ENCODE measurements at regions of chr10 and their contacts with region 1.

Region 1: GRCh38 chr10:7525314-7526016 is 114.6 kb upstream of the SFMBT2 start:
- DNase-seq: peak; percentile 83
- H3K4me3 ChIP-seq: peak overlapping the region in 1 of 2 experiments; percentile 33; a peak in 1 of 4 replicates
- H3K27ac ChIP-seq: no peak overlapping the region
- H3K4me1 ChIP-seq: peaks cover 0 to 3% of the 10 kb centered on the region in 2 experiments; a peak in 1 of 4 replicates
- H3K27me3 ChIP-seq: no peaks in the 10 kb centered on the region
- CTCF ChIP-seq: peak; percentile 83
- EP300 ChIP-seq: no peak
- RAD21 ChIP-seq: peak; percentile 95

Region 2: DNA sequence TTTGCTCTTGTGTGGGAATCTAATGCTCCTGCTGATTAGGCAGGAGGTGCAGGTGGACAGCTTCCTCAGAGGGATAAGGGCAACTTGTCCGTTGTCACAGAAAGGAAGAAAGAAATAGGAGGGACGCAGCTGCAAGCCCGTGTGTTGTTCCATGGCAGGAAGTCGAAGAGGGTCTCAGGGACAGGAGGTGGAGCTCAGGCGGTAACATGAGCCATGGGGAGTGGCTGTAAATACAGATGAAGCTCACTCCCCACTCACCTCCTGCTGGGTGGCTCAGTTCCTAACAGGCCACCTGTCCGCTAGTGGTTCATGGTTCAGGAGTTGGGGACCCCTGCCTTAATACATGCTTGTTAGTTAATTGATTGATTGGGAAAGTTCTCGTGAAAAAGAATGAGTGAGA is 13.0 kb before region 1 on chr10:
- CTCF ChIA-PET with region 1: interaction called, 15 read pairs
- POLR2A ChIA-PET with region 1: no interaction called
- DNase-seq: no peak
- H3K4me3 ChIP-seq: no peak overlapping the region
- H3K27ac ChIP-seq: no peak overlapping the region
- H3K4me1 ChIP-seq: peaks cover 0 to 3% of the 10 kb centered on the region in 2 experiments; a peak in 2 of 4 replicates
- H3K27me3 ChIP-seq: no peaks in the 10 kb centered on the region; the same call in 1 of the 2 replicates
- CTCF ChIP-seq: no peak
- EP300 ChIP-seq: no peak
- RAD21 ChIP-seq: no peak

Region 3: GRCh38 chr10:7538970-7539667 is 13.7 kb after region 1 on chr10:
- CTCF ChIA-PET with region 1: interaction called, 13 read pairs
- POLR2A ChIA-PET with region 1: no interaction called
- DNase-seq: no peak
- H3K4me3 ChIP-seq: no peak overlapping the region
- H3K27ac ChIP-seq: no peak overlapping the region
- H3K4me1 ChIP-seq: peaks cover 0 to 3% of the 10 kb centered on the region in 2 experiments; a peak in 2 of 4 replicates
- H3K27me3 ChIP-seq: no peaks in the 10 kb centered on the region
- CTCF ChIP-seq: no peak
- EP300 ChIP-seq: no peak
- RAD21 ChIP-seq: no peak

Region 4: GRCh38 chr10:7601023-7601859 is 75.8 kb after region 1 on chr10:
- CTCF ChIA-PET with region 1: no interaction called
- POLR2A ChIA-PET with region 1: no interaction called
- DNase-seq: no peak
- H3K4me3 ChIP-seq: no peak overlapping the region
- H3K27ac ChIP-seq: no peak overlapping the region
- H3K4me1 ChIP-seq: no peaks in the 10 kb centered on the region
- H3K27me3 ChIP-seq: no peaks in the 10 kb centered on the region
- CTCF ChIP-seq: no peak
- EP300 ChIP-seq: no peak
- RAD21 ChIP-seq: no peak

Region 5: DNA sequence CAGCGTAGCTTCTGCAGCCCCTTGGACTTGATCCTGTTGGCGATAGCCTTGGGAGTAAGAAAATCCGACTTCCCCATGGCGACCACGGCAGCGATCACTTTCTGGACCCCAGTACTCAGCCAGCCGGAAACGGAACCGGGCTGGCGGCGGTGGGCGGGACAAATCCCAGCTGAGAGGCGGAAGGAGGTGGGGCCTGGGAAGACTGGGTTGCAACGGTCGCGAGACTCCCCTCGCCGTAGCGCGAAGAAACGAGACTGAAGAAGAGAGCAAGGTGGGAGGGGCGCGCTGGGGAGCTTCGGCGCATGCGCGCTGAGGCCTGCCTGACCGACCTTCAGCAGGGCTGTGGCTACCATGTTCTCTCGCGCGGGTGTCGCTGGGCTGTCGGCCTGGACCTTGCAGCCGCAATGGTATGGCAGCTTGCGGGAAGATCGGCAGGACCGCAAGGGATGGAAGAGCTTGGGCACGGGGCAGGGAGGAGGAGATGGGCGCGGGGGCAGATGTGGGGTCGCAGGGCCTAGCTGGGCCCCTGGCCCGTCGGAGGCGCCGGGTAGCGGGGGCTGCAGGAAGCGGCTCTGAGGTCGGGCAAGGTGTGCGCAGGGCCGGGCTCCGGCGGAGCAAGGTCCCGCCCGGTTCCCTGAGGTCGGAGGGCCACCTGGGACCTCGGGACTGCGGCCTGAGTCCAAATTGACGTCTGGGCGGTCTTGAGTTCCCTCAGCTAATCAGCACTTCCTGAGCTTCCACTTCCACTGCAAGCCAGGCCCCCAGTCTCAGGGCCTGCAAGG is 262.6 kb after region 1 on chr10 and contains the starts of genes ATP5F1C and KIN:
- CTCF ChIA-PET with region 1: interaction called, 10 read pairs
- POLR2A ChIA-PET with region 1: no interaction called
- DNase-seq: peak; percentile 98
- H3K4me3 ChIP-seq: peak within 1 kb of the TSS; percentile 85 to 92
- H3K27ac ChIP-seq: peak within 1 kb of the TSS; percentile 65 to 77
- H3K4me1 ChIP-seq: peaks cover 12 to 14% of the 10 kb centered on the region in 2 experiments; a peak in 3 of 4 replicates
- H3K27me3 ChIP-seq: no peaks in the 10 kb centered on the region
- CTCF ChIP-seq: no peak
- EP300 ChIP-seq: no peak
- RAD21 ChIP-seq: no peak
- polyA plus RNA-seq, gene ATP5F1C: 299 and 331 TPM in 2 replicates
- polyA plus RNA-seq, gene KIN: 3.2 and 4.4 TPM in 2 replicates

Region 6: DNA sequence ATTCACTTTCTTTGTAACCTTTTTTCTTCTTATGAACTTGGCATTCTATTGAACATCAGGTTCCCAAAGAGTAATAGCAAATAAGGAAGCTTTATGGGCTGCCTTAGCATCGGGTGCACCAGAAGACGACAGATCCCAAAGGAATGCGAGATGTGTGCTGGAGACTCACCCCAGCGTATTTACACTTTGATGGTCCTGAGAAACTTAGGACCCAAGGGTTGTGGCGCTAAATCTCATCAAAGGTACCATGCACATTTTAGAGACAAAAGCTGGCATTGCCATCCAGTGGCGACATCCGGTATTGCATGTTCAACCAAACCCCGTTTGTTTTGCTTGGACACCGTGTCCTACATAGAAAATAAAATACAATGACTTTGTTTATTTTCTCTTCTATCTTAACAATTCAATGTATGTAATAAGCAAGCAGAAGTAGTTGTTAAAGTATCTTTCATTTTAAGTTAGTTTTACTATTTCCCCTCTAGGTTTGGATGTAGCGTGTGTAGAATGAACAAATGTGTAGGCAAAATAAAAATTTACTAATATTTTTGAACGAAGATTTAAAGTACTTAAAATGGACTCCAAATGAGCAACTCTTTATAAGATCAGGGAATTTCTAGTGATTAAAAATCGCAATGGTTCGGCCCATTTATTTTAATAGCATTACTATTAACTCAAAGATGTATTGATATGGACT is 1683.8 kb after region 1 on chr10:
- CTCF ChIA-PET with region 1: interaction called, 10 read pairs
- POLR2A ChIA-PET with region 1: no interaction called
- DNase-seq: peak; percentile 63
- H3K4me3 ChIP-seq: no peak overlapping the region; a peak in 1 of 4 replicates
- H3K27ac ChIP-seq: peak overlapping the region in 1 of 2 experiments; percentile 68; a peak in 1 of 4 replicates
- H3K4me1 ChIP-seq: peaks cover 0 to 7% of the 10 kb centered on the region in 2 experiments; a peak in 2 of 4 replicates
- H3K27me3 ChIP-seq: no peaks in the 10 kb centered on the region
- CTCF ChIP-seq: peak; percentile 88
- EP300 ChIP-seq: no peak
- RAD21 ChIP-seq: peak; percentile 98

Region 7: DNA sequence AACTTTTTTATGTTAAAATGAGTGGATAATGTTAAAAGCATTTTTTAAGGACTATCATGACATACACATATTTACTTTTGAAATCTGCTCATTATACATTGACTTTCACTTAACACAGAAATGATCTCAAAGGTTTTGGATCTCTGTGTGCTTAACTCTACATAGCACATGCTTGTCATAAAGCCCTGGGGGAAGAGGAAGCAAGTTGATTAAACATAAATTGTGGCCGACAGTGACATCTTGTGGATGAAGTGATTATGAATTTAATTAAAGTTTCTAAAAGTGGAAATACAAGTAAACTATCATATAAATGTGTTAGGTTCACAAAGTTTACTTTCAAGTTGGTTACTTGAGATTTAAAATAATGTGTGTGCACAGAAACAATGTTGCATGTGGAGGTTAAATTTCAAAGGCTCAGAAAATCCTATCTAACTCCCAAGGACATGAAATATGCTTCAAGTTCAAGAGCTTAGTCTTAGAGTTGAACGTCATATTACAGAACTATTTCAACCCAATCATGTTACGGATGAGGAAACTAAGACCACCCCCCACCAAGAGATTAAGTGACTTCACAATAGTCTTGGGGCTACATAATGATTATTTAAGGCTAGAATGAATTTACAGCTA is 1776.8 kb after region 1 on chr10:
- CTCF ChIA-PET with region 1: interaction called, 29 read pairs
- POLR2A ChIA-PET with region 1: no interaction called
- DNase-seq: no peak
- H3K4me3 ChIP-seq: no peak overlapping the region
- H3K27ac ChIP-seq: no peak overlapping the region; a peak in 1 of 4 replicates
- H3K4me1 ChIP-seq: peaks cover 0 to 17% of the 10 kb centered on the region in 2 experiments; a peak in 2 of 4 replicates
- H3K27me3 ChIP-seq: no peaks in the 10 kb centered on the region
- CTCF ChIP-seq: peak; percentile 67
- EP300 ChIP-seq: no peak
- RAD21 ChIP-seq: peak; percentile 81

Measured in SK-N-SH (cell line).